ENCODE measurements at regions of chr1 and their contacts with region 1.

Region 1: GRCh38 chr1:26864610-26865527 is 1.9 kb downstream of the SFN start:
- DNase-seq: peak; percentile 93
- ATAC-seq: peak; percentile 94
- H3K4me3 Mint-ChIP-seq: peak overlapping the region; percentile 92
- H3K27ac Mint-ChIP-seq: peak overlapping the region; percentile 98
- H3K4me1 Mint-ChIP-seq: peaks cover 23% of the 10 kb centered on the region
- H3K27me3 Mint-ChIP-seq: no peaks in the 10 kb centered on the region
- CTCF ChIP-seq: no peak

Region 2: GRCh38 chr1:26431979-26432695 is 432.7 kb before region 1 on chr1 and contains the start of gene DHDDS:
- CTCF ChIA-PET with region 1: no interaction called
- POLR2A ChIA-PET with region 1: no interaction called
- intact Hi-C with region 1: loop called (anchors 5 kb)
- DNase-seq: peak; percentile 99
- ATAC-seq: peak; percentile 95
- H3K4me3 Mint-ChIP-seq: peak within 1 kb of the TSS; percentile 95
- H3K27ac Mint-ChIP-seq: peak within 1 kb of the TSS; percentile 94
- H3K4me1 Mint-ChIP-seq: peaks cover 23% of the 10 kb centered on the region
- H3K27me3 Mint-ChIP-seq: no peaks in the 10 kb centered on the region
- CTCF ChIP-seq: no peak
- total RNA-seq, gene DHDDS: 53.0 and 65.0 TPM in 2 replicates

Region 3: DNA sequence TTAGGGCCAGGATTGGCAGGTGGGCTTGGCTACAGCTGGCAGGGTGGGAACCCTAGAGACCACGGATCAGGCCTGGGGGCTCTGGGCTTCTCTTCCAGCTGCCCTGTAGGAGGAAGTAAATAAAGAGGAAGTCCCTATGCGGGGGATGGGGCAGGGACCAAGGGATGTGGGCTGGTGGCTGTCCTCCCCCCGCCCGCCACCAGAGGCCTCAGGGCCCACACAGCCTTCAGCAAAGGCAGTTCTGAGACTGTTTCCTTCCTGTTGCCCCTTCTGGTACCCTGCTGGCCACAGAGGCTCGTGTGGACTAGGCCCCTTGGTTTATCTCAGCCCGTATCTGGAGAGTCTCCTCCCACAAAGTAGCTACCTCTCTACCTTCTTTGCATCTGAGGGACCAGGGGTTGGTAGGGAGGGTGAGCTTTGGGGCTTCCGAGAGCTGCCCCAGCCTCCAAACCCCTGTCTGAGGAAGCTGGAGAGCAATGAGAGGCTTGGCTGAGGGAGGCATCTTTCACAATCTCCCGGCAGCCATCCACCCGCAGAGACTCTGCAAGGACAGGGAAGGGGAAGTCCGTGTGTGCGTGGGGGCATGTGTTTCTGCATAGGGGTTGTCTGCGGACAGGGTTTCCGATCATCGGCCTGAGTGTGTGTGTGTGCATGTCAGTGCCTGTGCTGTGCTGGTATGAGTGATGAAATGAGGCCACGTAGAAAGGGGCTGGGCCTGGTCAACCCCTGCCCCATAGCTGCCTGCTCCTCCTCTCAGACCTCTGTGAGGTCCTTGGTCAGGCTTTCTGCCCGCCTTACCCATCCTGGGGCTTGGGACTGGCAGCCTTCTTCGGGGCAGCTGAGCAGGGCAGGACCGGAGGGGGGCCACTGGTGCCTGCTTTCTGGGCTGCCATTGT is 322.8 kb before region 1 on chr1:
- CTCF ChIA-PET with region 1: no interaction called
- POLR2A ChIA-PET with region 1: interaction called, 6 read pairs
- intact Hi-C with region 1: loop called (anchors 1 kb)
- DNase-seq: peak; percentile 72
- ATAC-seq: peak; percentile 62
- H3K4me3 Mint-ChIP-seq: peak overlapping the region; percentile 82
- H3K27ac Mint-ChIP-seq: peak overlapping the region; percentile 99
- H3K4me1 Mint-ChIP-seq: peaks cover 93% of the 10 kb centered on the region
- H3K27me3 Mint-ChIP-seq: no peaks in the 10 kb centered on the region
- CTCF ChIP-seq: no peak

Region 4: DNA sequence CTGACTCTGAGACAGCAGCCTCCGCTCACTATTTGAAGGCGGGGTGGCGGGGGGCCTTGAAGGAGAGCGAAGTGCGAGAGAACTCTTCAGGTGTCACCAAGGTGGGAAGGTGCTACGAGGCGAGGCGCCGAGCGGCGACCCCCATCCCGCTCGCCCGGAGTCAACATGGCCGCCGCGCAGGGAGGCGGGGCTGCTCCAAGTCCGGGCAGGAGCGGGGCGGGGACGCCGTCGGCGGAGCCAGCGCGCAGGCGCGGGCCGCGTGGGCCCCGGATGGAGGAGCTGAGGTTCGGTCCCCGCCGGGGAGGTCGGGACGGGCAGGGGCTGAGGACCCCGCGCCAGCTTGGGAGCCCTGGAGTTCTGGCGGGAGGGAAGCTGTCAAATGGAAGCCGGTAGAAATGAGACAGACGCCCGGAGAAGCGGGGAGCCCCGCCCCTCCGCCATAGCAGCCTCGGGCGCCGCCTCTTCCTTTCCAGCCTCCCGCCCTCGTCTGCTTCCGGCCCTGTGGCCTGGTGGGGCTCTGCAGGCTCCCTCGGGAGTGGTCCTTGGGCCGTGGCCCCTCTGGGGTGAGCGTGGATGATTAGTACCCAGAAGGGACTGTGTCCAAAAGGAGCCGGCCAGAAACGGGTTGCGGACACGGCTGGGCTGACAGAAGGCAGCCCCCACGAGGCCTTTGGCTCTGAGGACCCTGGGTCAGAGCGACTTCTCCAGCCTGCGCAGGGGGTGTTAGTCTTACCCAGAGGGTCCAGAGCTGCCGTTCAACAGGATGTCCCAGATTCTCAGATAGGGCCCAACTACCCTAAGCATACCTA is 77.0 kb before region 1 on chr1 and contains the start of gene PIGV:
- CTCF ChIA-PET with region 1: interaction called, 15 read pairs
- POLR2A ChIA-PET with region 1: interaction called, 27 read pairs
- intact Hi-C with region 1: no loop called
- DNase-seq: peak; percentile 94
- ATAC-seq: peak; percentile 70
- H3K4me3 Mint-ChIP-seq: peak within 1 kb of the TSS; percentile 98
- H3K27ac Mint-ChIP-seq: peak within 1 kb of the TSS; percentile 100
- H3K4me1 Mint-ChIP-seq: peaks cover 51% of the 10 kb centered on the region
- H3K27me3 Mint-ChIP-seq: no peaks in the 10 kb centered on the region
- CTCF ChIP-seq: no peak
- total RNA-seq, gene PIGV: 29.6 and 35.4 TPM in 2 replicates

Region 5: GRCh38 chr1:26833432-26834405 is 31.1 kb before region 1 on chr1:
- CTCF ChIA-PET with region 1: interaction called, 8 read pairs
- POLR2A ChIA-PET with region 1: interaction called, 38 read pairs
- intact Hi-C with region 1: loop called (anchors 2 kb)
- DNase-seq: peak; percentile 61
- ATAC-seq: peak; percentile 96
- H3K4me3 Mint-ChIP-seq: peak overlapping the region; percentile 53
- H3K27ac Mint-ChIP-seq: peak overlapping the region; percentile 93
- H3K4me1 Mint-ChIP-seq: peaks cover 59% of the 10 kb centered on the region
- H3K27me3 Mint-ChIP-seq: no peaks in the 10 kb centered on the region
- CTCF ChIP-seq: no peak

Region 6: GRCh38 chr1:26882696-26883463 is 18.0 kb after region 1 on chr1:
- CTCF ChIA-PET with region 1: interaction called, 7 read pairs
- POLR2A ChIA-PET with region 1: interaction called, 64 read pairs
- intact Hi-C with region 1: loop called (anchors 1 kb)
- DNase-seq: no peak
- ATAC-seq: no peak
- H3K4me3 Mint-ChIP-seq: no peak overlapping the region
- H3K27ac Mint-ChIP-seq: no peak overlapping the region
- H3K4me1 Mint-ChIP-seq: peaks cover 6% of the 10 kb centered on the region
- H3K27me3 Mint-ChIP-seq: no peaks in the 10 kb centered on the region
- CTCF ChIP-seq: no peak

Region 7: DNA sequence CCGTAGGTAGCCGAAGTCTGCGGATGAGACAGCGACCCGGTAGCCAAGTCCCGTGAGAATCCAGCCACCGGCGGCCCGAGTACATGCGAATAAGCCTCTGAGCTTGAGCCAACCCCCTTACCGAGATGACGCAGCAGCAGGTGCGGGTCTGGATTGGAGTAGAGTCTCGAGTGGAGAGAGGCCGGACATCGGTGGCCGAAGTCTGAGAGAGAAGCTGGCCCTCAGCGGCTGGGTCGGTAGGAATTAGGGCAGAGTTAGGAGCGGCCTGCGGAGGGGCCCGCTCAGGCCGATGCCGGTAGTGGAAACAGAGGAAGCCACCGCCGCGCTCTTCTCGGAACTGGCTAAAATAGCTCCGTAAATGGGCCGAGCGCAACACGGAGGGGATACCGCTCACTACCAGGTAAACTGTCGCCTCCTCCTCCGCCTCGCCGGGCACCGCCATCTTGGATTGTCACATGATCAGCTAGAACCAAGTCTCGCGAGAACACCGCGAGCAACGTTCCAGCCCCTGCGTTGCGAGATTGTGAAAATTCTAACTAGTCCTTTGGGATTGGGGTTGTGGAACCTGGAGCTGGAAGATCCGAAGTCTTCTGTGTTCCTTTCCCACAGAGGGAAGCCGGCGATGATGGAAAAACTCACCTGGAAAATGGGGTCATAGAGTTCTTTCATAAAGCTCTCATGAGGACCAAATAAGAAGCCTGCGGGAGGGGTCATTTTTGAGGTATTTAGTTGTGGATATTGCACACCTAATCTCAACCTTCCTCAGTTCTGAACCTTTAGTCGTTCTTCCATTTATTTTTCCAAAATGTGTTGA is 35.3 kb after region 1 on chr1 and contains the start of gene GPATCH3:
- CTCF ChIA-PET with region 1: interaction called, 3 read pairs
- POLR2A ChIA-PET with region 1: interaction called, 30 read pairs
- intact Hi-C with region 1: no loop called
- DNase-seq: peak; percentile 68
- ATAC-seq: peak; percentile 89
- H3K4me3 Mint-ChIP-seq: peak within 1 kb of the TSS; percentile 99
- H3K27ac Mint-ChIP-seq: peak within 1 kb of the TSS; percentile 100
- H3K4me1 Mint-ChIP-seq: peaks cover 32% of the 10 kb centered on the region
- H3K27me3 Mint-ChIP-seq: no peaks in the 10 kb centered on the region
- CTCF ChIP-seq: no peak
- total RNA-seq, gene GPATCH3: 24.0 and 26.0 TPM in 2 replicates

Measured in activated B cell treated with CpG ODN at 0.5 μM for 24 hours (primary cell).